Thyroid gland (tissue), 4 donors: ENCODE measurements at regions of chr9 and their contacts with region 1.

Region 1: GRCh38 chr9:69115621-69116020 is 58.5 kb upstream of the TJP2 start:
- DNase-seq: no peak
- H3K4me3 ChIP-seq: no peak overlapping the region
- H3K27ac ChIP-seq: no peak overlapping the region
- H3K4me1 ChIP-seq: peaks cover 10 to 15% of the 10 kb centered on the region in 2 donors
- H3K27me3 ChIP-seq: no peaks in the 10 kb centered on the region
- CTCF ChIP-seq: no peak
- POLR2A ChIP-seq: no peak

Region 2: GRCh38 chr9:68728731-68729130 is 386.9 kb before region 1 on chr9:
- intact Hi-C with region 1: no loop called
- DNase-seq: no peak
- H3K4me3 ChIP-seq: no peak overlapping the region
- H3K27ac ChIP-seq: no peak overlapping the region
- H3K4me1 ChIP-seq: no peaks in the 10 kb centered on the region
- H3K27me3 ChIP-seq: no peaks in the 10 kb centered on the region
- CTCF ChIP-seq: no peak
- POLR2A ChIP-seq: no peak

Region 3: DNA sequence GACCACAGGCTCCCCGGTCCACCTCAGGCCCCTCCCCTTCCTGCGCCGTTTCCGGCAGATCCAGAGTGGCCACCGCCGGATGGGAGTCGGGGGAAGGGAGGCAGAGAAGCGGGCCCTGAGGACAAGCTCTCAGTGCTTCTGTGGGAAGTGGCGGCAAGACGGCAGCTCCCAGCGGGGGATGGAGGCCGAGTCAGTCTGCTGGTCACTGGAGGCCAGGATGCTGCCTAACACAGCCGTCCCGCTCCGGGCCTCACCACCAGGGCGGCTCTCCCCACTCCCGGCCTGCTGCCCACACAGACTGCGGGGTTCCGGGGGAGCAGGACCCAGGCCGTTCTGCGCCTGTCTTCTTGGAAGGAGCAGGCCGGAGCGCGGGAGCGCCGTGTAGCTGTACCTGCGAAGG is 48.7 kb before region 1 on chr9:
- intact Hi-C with region 1: loop called (anchors 10 kb)
- DNase-seq: no peak
- H3K4me3 ChIP-seq: no peak overlapping the region
- H3K27ac ChIP-seq: no peak overlapping the region
- H3K4me1 ChIP-seq: peaks cover 0 to 9% of the 10 kb centered on the region in 2 donors
- H3K27me3 ChIP-seq: no peaks in the 10 kb centered on the region
- CTCF ChIP-seq: no peak
- POLR2A ChIP-seq: no peak